ENCODE measurements at regions of chr20 and their contacts with region 1.

Region 1: DNA sequence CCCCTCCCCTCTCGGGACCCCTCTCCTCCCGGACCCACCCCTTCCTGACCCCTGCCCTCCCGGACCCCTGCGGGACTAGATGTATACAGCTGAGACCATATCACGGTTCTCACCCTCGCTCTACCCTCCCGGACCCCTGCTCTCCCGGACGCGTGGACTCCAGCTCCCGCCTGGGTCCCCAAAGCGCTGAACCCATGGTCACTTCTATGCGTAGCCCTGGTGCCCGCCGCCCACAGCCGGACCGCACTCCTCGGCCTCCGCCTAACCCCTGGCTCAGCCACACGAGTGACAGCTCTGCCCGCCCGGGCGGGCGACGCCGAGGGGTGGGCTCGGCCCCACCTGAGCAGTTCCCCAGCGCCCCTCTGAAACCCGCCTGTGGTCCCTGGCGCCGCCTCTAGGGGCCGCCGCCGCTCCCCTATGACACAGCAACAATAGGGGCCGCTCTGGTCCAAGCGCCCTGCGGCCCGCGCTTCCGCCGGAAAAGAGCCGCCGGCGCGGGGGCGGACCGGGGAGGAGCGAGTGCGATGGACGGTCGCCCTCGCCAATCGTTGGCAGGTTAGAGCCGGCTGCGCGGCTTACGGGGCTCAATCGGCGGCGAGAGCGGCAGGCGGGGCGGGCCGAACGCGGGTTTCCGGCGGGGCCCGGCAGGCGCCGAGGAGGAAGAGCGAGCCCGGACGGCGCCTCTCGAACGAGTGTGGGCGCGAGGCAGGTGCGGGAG is at the start of gene ADRM1:
- DNase-seq: peak; percentile 98
- H3K4me3 ChIP-seq: peak within 1 kb of the TSS; percentile 100
- H3K27ac ChIP-seq: peak within 1 kb of the TSS; percentile 85
- H3K4me1 ChIP-seq: peaks cover 27% of the 10 kb centered on the region
- CTCF ChIP-seq: peak; percentile 84
- total RNA-seq, gene ADRM1: 123 and 128 TPM in 2 replicates

Region 2: DNA sequence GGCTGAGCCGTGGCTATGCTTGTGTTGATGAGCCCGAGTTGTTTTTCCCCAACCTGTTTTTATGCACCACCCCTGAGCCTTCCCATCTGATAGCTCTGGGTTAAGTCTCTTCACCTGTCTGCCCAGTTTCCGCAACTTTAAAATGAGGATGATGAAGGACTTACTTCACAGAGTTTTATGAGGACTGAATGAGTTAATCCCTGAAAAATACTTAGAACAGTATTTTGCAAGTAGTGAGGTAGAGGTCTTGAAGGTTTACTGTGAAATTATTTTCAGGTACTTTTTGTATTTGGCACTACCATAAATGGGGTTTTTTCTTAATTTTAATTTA is 116.4 kb before region 1 on chr20:
- CTCF ChIA-PET with region 1: no interaction called
- POLR2A ChIA-PET with region 1: no interaction called
- intact Hi-C with region 1: no loop called
- DNase-seq: no peak
- H3K4me3 ChIP-seq: no peak overlapping the region
- H3K27ac ChIP-seq: no peak overlapping the region
- H3K4me1 ChIP-seq: peaks cover 28% of the 10 kb centered on the region
- CTCF ChIP-seq: no peak

Region 3: GRCh38 chr20:62237801-62238571 is 64.5 kb before region 1 on chr20 and contains the start of gene OSBPL2:
- CTCF ChIA-PET with region 1: no interaction called
- POLR2A ChIA-PET with region 1: no interaction called
- intact Hi-C with region 1: loop called (anchors 1 kb)
- DNase-seq: peak; percentile 98
- H3K4me3 ChIP-seq: peak within 1 kb of the TSS; percentile 80
- H3K27ac ChIP-seq: peak within 1 kb of the TSS; percentile 6
- H3K4me1 ChIP-seq: peaks cover 15% of the 10 kb centered on the region
- CTCF ChIP-seq: no peak
- total RNA-seq, gene OSBPL2: 17.2 and 20.7 TPM in 2 replicates

Region 4: DNA sequence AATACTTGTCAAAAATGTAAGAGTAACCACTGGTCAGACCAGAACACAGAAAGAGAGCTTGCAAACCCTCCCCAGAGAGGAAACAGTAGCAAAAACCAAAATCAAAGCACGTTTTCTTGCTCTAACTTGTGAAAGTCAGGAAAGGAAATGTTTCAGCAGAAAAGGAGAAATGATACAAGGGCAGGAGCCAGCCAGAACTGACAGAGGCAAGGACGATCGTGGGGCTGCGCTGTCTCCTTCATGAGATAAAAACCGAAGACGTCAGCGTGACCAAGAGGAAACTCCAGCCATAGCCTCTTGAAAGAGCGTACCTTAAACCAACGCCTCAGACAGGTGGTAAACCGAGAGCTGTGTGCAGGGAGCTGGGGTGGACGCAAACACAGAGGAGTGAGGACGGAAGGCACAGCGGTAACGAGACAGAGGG is 37.2 kb after region 1 on chr20:
- CTCF ChIA-PET with region 1: no interaction called
- POLR2A ChIA-PET with region 1: interaction called, 4 read pairs
- intact Hi-C with region 1: loop called (anchors 1 kb)
- DNase-seq: peak; percentile 92
- H3K4me3 ChIP-seq: peak overlapping the region; percentile 62
- H3K27ac ChIP-seq: peak overlapping the region; percentile 97
- H3K4me1 ChIP-seq: peaks cover 71% of the 10 kb centered on the region
- CTCF ChIP-seq: no peak

Region 5: DNA sequence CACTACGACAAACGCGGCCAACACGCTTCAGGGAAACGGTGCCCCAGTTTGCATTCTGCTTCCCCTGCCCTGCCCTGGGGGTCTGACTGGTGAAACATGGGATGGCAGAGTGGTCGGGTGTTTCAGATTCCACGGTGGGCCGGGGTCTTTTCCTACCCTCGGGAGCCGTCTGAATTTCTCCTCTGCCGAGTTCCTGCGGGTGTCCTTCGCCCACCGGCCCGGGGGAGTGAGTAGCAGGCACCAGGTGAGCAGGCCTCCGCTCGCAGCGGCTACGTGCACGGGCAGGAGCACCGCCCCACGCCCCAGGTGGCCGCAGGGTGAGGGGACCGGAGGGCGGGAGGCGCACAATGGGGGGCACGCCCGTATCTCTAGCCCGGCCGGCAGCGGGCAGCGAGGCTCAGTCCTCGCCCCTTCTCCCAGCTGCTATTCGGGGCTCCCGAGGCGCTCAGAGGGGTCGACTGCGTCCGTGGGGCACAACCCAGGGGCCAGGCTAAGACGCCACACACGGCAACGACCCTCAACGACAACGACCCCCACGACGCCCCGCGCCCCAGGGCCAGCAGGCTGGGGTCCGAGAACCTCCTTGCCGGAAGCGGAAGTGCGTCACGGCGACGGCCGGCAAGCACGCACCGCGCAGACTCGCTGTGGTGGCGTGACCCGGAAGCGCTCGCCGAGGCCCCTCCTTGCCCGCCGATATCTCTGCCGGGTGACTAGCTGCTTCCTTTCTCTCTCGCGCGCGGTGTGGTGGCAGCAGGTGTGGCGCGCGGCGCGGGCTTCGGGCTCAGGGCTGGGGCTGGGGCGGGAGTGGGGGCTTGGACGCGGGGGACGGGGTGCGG is 84.1 kb after region 1 on chr20 and contains the start of gene RPS21:
- CTCF ChIA-PET with region 1: interaction called, 12 read pairs
- POLR2A ChIA-PET with region 1: interaction called, 6 read pairs
- intact Hi-C with region 1: loop called (anchors 1 kb)
- DNase-seq: peak; percentile 95
- H3K4me3 ChIP-seq: peak within 1 kb of the TSS; percentile 100
- H3K27ac ChIP-seq: peak within 1 kb of the TSS; percentile 72
- H3K4me1 ChIP-seq: peaks cover 45% of the 10 kb centered on the region
- CTCF ChIP-seq: no peak
- total RNA-seq, gene RPS21: 2,092 and 3,376 TPM in 2 replicates

Region 6: DNA sequence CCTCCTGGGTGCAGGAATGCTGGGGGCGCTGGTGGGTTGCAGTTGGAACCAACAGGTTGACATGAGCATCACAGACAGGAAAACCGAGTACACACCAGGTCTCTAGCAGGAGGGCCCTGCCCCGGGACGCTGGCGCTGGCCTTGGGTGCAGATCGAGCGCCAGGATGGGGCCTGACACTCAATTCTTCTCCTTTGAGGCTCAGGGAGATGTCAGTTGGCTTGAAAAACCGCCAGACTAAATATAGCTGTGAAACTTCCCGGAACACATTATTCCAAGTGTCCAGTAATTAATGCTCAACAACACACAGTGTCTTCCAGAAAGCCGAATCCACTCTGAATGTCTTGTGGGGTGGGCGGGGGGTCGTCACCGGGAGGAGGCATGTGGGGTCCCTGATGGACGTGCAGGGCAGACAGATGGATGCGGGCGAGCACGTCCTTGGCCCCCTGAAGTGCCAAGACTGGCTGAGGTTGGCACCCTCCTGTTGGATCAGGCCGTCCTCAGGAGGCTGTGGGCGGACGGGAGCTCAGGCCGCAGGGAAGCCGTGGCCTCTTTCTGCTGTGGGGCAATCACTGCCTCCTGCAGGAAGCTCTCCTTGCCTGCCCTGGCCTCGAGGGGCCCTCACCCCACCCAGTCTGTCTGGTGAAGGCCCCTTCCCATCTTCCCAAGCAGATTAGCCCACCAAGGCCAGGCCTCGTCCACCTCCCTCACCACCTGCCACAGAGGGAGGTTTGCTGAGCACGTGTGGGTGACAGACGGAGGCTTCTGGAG is 192.7 kb after region 1 on chr20:
- CTCF ChIA-PET with region 1: no interaction called
- POLR2A ChIA-PET with region 1: no interaction called
- intact Hi-C with region 1: loop called (anchors 1 kb)
- DNase-seq: no peak
- H3K4me3 ChIP-seq: peak overlapping the region; percentile 63
- H3K27ac ChIP-seq: peak overlapping the region; percentile 80
- H3K4me1 ChIP-seq: peaks cover 37% of the 10 kb centered on the region
- CTCF ChIP-seq: peak; percentile 15; the same call in 1 of the 2 replicates

Region 7: DNA sequence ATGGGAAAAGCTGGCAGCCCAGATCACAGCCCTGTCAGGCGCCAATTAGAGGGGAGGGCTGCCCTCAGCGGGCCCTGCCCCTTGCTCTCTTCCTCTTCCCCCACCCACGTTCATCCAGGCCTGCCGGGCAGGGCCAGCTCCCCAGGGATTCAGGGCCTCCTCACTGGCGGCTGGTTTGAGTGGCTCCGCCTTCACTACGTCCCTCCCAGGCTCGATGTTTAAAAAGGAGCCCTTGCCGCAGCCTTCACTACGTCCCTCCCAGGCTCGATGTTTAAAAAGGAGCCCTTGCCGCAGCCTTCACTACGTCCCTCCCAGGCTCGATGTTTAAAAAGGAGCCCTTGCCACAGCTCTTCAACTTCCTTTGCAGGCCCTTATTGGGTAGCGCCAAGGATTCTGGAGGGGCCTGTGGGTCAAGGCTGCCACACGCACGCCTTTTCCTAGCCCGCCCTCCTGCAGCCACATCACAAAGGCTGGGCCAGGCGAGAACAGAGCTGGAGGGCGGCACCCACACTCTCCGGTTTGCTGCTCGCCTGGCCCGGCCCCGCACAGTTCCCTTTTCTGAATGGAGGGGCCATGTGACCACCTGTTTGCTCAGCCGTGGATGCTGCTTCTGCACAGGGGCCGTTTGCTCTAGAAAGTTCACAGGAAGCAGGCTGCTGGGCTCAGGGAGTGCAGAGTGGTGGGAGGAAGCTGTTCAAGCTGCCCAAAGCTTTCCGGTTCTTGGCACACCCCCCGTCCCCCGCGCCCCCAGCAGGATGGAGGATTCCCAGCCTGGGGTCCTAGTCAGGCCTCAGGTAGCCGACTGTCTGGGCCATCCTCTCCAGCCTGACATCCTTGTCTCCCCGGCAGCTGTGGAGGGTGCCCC is 651.6 kb after region 1 on chr20:
- CTCF ChIA-PET with region 1: no interaction called
- POLR2A ChIA-PET with region 1: no interaction called
- intact Hi-C with region 1: no loop called
- DNase-seq: peak; percentile 96
- H3K4me3 ChIP-seq: peak overlapping the region; percentile 44
- H3K27ac ChIP-seq: peak overlapping the region; percentile 89
- H3K4me1 ChIP-seq: peaks cover 24% of the 10 kb centered on the region
- CTCF ChIP-seq: no peak